PC-3 (cell line): ENCODE measurements at regions of chr11 and their contacts with region 1.

Region 1: DNA sequence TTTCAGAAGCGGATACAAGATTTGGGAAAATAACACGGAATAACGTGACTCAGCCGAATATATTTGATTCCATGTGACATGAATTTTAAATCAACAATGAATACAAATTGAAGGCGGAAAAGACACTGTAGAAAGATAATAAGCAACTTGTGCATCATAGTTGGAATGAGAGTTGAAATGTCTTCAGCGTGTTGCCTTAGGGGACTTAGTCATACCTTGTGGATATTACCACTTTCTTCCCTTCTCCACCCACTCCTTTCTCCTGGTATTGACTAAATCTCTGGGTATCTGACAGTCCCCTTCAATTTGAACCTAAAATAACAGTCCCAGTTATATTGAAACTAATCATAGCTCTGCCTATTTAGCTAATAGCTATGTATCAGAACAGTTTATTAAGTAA is 2373.1 kb upstream of the RAG2 start:
- DNase-seq: peak; percentile 85
- ATAC-seq: peak; percentile 99
- H3K4me3 ChIP-seq: no peak overlapping the region
- H3K27ac ChIP-seq: peak overlapping the region; percentile 67; the same call in 1 of the 2 replicates
- H3K4me1 ChIP-seq: peaks cover 13% of the 10 kb centered on the region
- H3K27me3 ChIP-seq: no peaks in the 10 kb centered on the region
- CTCF ChIP-seq: no peak

Region 2: GRCh38 chr11:37905707-37906417 is 1065.3 kb before region 1 on chr11:
- CTCF ChIA-PET with region 1: no interaction called
- POLR2A ChIA-PET with region 1: no interaction called
- intact Hi-C with region 1: no loop called
- DNase-seq: peak; percentile 91
- ATAC-seq: peak; percentile 93
- H3K4me3 ChIP-seq: no peak overlapping the region
- H3K27ac ChIP-seq: no peak overlapping the region
- H3K4me1 ChIP-seq: peaks cover 6% of the 10 kb centered on the region; the same call in 1 of the 2 replicates
- H3K27me3 ChIP-seq: no peaks in the 10 kb centered on the region
- CTCF ChIP-seq: no peak

Region 3: DNA sequence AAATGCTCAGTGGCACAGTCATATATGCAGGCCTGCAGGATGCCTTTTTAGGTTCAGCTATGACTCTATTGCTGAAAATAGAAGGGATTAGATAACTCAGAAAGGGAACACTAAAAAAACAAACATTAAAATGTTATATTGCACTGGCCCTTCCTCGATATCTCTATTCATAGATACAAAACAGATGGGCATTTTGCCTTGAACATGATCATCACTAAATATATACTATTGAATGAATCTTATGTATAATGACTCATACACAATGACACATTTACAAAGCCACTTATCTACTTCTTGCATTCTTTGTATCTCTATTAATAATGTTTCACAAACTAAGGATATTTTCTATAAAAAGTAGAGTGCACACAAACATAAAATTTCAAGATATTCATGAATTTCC is 20.3 kb before region 1 on chr11:
- CTCF ChIA-PET with region 1: no interaction called
- POLR2A ChIA-PET with region 1: no interaction called
- intact Hi-C with region 1: loop called (anchors 2 kb)
- DNase-seq: peak; percentile 68
- ATAC-seq: peak; percentile 89
- H3K4me3 ChIP-seq: no peak overlapping the region
- H3K27ac ChIP-seq: no peak overlapping the region
- H3K4me1 ChIP-seq: peaks cover 4% of the 10 kb centered on the region; the same call in 1 of the 2 replicates
- H3K27me3 ChIP-seq: no peaks in the 10 kb centered on the region
- CTCF ChIP-seq: no peak

Region 4: DNA sequence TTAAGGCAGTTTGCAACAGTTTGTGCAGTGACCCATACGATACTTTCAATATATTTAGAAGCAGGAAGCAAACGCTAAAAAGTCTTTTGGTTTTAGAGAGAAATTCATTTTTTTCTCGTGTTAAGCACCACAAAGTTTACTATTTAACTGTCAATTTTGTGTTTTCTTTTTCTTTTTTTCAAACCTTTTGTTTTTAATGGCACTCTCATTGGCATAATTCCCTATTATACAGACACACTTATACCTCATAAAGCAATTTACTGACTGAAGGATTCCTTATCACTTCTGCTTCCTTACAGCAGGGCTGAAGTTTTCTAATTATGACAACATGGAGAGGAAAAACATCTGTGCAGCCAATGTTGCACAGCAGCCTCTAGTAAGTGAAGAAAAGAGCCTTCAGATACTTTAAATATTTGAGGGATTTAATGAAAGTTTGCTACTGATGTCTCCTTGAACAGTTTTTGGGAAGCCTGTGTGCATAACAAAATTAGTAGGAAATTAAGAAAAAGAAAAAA is 297.1 kb after region 1 on chr11:
- CTCF ChIA-PET with region 1: no interaction called
- POLR2A ChIA-PET with region 1: no interaction called
- intact Hi-C with region 1: loop called (anchors 10 kb)
- DNase-seq: no peak
- ATAC-seq: no peak
- H3K4me3 ChIP-seq: no peak overlapping the region
- H3K27ac ChIP-seq: no peak overlapping the region
- H3K4me1 ChIP-seq: no peaks in the 10 kb centered on the region
- H3K27me3 ChIP-seq: no peaks in the 10 kb centered on the region
- CTCF ChIP-seq: no peak